Activated CD4-positive, alpha-beta T cell treated with anti-CD3 and anti-CD28 coated beads, Interleukin-2, amount 10 ng/mL, durations not matched to agents 24 days and 14 days (primary cell): ENCODE measurements at regions of chr3 and their contacts with region 1.

Region 1: DNA sequence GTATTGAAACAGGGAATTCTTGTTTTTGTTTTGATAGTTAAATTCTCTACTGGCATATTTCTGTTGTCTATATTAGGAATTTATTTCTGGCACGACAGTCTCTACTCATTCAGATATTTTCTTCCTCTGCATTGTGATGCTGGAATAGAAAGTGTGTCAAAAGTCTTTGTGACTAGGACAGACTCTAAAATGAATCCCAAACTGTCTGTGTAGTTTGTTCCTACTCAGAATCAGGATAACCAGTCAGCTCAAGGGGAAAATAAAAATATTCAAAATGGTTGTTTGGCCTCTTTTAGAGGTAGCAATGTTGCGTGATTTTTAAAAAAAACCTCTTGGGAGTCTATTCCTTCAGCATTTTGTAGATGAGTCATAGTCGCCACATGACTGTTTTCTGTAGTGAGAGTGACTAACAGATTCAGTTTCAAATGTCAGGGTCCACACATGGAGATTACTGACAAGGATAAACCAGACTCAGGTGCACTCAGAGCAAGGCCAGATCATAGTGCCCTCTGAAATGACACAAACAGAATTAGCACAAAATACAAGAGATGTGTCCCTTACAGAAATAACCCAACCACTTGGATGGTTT is 13.1 kb downstream of the SLC7A14 start:
- DNase-seq: peak; percentile 62
- H3K4me3 Mint-ChIP-seq: no peak overlapping the region
- H3K27ac Mint-ChIP-seq: peak overlapping the region; percentile 20
- H3K4me1 Mint-ChIP-seq: peaks cover 18% of the 10 kb centered on the region
- H3K27me3 Mint-ChIP-seq: peaks cover 14% of the 10 kb centered on the region

Region 2: DNA sequence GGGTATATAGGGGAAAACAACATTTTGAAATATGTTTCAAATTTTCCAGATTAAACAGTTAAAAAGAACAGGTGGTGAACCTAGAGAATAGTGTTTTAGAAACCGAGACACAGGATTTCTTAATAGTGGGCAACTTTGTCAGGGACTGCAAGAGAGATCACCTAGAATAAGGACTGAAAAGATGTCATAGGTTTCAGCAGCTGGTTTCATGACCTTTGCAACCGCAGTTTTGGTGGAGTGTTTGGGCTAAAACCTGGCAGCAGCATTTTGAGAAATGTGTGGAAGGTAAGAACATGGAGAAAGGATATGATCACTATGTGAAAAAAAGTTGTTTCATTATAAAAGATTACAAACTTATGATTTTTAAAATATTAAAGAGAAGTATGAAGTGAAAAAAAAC is 315.6 kb before region 1 on chr3:
- intact Hi-C with region 1: loop called (anchors 2 kb)
- DNase-seq: no peak
- H3K4me3 Mint-ChIP-seq: peak overlapping the region; percentile 24
- H3K27ac Mint-ChIP-seq: peak overlapping the region; percentile 83
- H3K4me1 Mint-ChIP-seq: peaks cover 40% of the 10 kb centered on the region
- H3K27me3 Mint-ChIP-seq: no peaks in the 10 kb centered on the region

Region 3: DNA sequence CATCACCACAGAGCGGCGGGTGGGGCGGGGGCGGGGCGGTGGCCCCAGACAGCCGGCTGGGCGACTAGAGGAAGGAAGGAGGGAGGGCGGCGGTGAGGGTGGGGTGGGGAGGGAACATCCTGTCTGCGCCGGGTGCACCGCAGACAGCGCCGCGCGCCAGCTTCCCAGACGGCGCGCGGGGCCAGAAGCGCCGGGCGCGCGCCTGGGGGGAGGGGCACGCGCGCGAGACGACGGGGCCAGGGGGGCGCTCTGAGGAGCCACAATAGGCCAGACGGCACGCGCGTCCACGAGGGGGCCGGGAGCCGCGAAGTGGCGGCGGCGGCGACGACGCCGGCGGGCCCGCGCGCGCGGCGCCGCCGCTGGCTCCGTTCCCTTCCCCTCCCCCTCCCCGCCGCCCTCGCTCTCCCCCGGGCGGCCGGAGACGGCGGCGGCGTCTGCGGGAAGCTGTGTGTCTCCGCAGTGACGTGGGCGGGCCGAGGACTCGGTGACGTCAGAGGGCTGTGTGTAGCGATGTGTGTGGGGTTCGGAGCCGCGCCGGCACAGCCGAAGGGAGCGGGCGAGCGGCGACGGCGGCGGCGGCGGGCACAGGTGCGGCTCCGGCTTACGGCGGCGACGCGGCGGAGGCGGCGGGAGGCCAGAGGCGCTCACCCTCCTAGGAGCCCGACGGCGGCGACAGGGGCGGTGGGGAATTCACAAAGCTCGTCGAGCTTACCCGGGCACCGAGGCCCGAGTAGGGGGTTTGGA is 215.4 kb before region 1 on chr3 and contains the start of gene SKIL:
- intact Hi-C with region 1: loop called (anchors 2 kb)
- DNase-seq: peak; percentile 98
- H3K4me3 Mint-ChIP-seq: peak within 1 kb of the TSS; percentile 79
- H3K27ac Mint-ChIP-seq: peak within 1 kb of the TSS; percentile 95
- H3K4me1 Mint-ChIP-seq: peaks cover 27% of the 10 kb centered on the region
- H3K27me3 Mint-ChIP-seq: peaks cover 7% of the 10 kb centered on the region
- total RNA-seq, gene SKIL: 23.3 TPM in 2 replicates

Region 4: DNA sequence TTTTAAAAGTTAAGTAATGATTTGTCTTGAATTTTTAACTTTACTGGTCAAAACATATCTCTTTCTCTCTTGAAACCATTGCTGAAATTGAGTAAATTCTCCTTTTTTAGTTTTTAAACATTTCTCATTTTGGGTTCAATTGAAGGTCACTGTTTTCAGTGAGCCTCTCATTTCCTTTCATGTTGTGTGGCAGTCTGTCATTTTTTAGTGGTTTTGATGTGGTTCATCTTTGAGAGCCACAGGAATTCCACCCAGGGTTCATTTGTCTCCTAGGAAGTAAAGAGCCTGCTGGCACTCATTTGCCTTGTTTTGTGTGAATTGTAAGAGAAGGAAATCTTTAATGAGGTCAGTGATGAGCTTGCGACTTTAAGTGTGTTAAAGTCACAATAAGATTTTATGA is 143.7 kb before region 1 on chr3:
- intact Hi-C with region 1: loop called (anchors 2 kb)
- DNase-seq: no peak
- H3K4me3 Mint-ChIP-seq: no peak overlapping the region
- H3K27ac Mint-ChIP-seq: no peak overlapping the region
- H3K4me1 Mint-ChIP-seq: peaks cover 11% of the 10 kb centered on the region
- H3K27me3 Mint-ChIP-seq: peaks cover 7% of the 10 kb centered on the region

Region 5: GRCh38 chr3:170610321-170610884 is 37.6 kb after region 1 on chr3:
- intact Hi-C with region 1: loop called (anchors 1 kb)
- DNase-seq: no peak
- H3K4me3 Mint-ChIP-seq: no peak overlapping the region
- H3K27ac Mint-ChIP-seq: no peak overlapping the region
- H3K4me1 Mint-ChIP-seq: no peaks in the 10 kb centered on the region
- H3K27me3 Mint-ChIP-seq: peaks cover 5% of the 10 kb centered on the region

Region 6: DNA sequence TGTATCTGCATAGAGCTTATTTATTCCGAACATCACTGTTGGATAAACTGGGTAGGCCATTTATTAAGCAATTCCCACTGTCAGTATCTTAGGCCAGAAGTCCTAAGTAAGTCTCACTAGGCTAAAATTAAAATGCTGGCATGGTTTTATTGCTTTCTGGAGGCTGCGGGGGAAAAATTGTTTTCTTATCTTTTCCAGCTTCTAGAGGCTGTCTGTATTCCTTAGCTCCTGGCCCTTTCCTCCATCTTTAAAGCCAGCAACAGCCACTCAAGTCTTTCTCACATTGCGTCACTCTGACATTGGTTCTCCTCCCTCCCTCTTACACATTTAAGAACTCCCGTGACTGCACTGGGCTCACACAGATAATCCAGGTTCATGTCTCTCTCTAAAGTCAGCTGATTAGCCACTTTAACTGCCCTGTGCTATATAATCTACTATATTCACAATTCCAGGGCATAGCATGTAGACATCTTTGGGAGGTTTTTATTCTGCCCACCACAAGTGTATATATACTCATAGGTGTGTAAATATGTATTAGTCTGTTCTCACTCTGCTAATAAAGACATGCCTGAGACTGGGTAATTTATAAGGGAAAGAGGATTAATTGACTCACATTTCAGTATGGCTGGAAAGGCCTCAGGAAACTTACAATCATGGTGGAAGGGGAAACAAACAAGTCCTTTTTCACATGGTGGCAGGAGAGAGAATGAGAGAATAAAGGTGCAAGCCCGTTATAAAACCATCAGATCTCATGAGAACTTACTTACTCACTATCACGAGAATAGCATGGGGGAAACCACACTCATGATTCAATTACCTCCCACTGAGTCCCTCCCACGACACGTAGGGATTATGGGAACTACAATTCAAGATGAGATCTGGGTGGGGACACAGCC is 126.6 kb after region 1 on chr3:
- intact Hi-C with region 1: loop called (anchors 5 kb)
- DNase-seq: no peak
- H3K4me3 Mint-ChIP-seq: no peak overlapping the region
- H3K27ac Mint-ChIP-seq: no peak overlapping the region
- H3K4me1 Mint-ChIP-seq: peaks cover 6% of the 10 kb centered on the region
- H3K27me3 Mint-ChIP-seq: no peaks in the 10 kb centered on the region